ENCODE measurements at regions of chr14 and their contacts with region 1.

Region 1: DNA sequence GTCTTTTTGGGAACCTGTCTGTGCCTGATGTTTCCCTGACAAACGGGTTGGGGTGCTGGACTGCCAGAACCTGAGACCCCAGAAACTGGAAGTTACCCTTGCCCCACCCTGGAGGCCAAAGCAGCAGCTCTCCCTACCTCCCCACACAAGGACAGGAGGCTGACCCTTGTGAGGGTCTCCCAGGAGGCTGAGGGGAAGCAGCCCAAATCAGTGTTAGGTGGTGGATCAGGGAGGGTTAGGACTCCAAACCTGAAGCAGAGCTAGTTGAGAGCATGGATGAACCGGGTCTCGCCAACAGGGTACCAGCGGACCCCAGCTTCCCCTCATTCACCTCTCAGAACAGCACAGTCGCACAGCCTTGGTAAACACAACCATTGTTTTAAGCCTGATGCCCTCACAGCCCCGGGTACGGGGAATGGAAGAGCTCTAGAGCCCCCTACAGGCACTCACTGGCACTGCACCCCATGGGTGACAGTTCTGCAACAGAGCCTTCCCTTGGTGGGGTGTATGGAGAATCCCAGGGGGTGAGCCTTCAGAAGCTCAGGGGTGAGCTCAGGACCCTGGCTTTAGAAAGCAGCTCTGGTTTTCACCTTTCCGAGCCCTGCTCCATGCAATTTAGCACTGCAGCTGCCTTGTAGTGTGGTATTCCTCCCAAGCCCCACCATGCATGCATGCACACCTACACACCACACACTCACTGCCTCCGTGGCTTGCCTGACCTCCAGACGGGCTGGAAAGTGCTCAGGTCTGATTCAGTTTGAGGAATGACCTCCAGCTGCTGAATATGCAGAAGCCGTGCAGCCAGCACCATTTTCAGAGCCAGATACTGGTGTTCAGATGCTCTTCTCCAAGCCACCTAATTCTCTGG is 11.2 kb downstream of the ESRRB start:
- DNase-seq: peak; percentile 85

Region 2: GRCh38 chr14:76050797-76051392 is 336.3 kb before region 1 on chr14:
- intact Hi-C with region 1: loop called in 1 of 2 experiments (anchors 10 kb)
- DNase-seq: no peak